Activated CD8-positive, alpha-beta T cell treated with anti-CD3 and anti-CD28 coated beads for 36 hours (primary cell): ENCODE measurements at regions of chr4 and their contacts with region 1.

Region 1: GRCh38 chr4:185134307-185134869 is 8.7 kb upstream of the SLC25A4 start:
- DNase-seq: no peak
- ATAC-seq: peak; percentile 80
- H3K4me3 Mint-ChIP-seq: no peak overlapping the region
- H3K27ac Mint-ChIP-seq: no peak overlapping the region
- H3K4me1 Mint-ChIP-seq: no peaks in the 10 kb centered on the region
- H3K27me3 Mint-ChIP-seq: peaks cover 12% of the 10 kb centered on the region
- CTCF ChIP-seq: peak; percentile 80

Region 2: DNA sequence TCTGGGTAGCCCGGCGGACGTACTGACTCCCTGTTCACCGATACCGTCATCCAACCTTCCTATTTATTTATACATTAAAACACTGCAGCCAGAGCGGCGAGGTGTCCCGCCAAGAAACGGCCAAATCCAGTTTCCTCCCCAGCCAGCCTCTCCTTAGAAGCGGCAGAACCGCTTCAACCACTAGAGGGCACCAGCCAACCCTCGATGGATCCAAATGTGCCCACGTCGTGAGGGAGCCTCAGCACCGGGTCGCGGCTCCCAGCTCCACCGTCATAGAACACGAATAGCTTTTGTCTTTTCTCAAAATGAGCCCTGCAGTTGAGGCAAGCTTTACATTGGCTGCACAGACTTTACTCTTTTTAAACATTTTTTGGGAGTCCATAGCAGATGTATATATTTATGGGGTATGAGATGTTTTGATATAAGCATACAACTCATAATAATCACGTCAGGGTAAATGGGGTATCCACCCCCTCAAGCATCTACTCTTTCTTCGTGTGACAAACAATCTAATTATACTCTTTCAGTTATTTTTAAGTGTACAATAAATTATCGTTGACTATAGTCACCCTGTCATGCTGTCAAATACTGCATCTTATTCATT is 129.1 kb before region 1 on chr4:
- CTCF ChIA-PET with region 1: interaction called, 9 read pairs
- POLR2A ChIA-PET with region 1: no interaction called
- intact Hi-C with region 1: loop called (anchors 10 kb)
- DNase-seq: peak; percentile 92
- ATAC-seq: peak; percentile 97
- H3K4me3 Mint-ChIP-seq: peak overlapping the region; percentile 1
- H3K27ac Mint-ChIP-seq: no peak overlapping the region
- H3K4me1 Mint-ChIP-seq: peaks cover 3% of the 10 kb centered on the region
- H3K27me3 Mint-ChIP-seq: peaks cover 39% of the 10 kb centered on the region
- CTCF ChIP-seq: peak; percentile 87

Region 3: DNA sequence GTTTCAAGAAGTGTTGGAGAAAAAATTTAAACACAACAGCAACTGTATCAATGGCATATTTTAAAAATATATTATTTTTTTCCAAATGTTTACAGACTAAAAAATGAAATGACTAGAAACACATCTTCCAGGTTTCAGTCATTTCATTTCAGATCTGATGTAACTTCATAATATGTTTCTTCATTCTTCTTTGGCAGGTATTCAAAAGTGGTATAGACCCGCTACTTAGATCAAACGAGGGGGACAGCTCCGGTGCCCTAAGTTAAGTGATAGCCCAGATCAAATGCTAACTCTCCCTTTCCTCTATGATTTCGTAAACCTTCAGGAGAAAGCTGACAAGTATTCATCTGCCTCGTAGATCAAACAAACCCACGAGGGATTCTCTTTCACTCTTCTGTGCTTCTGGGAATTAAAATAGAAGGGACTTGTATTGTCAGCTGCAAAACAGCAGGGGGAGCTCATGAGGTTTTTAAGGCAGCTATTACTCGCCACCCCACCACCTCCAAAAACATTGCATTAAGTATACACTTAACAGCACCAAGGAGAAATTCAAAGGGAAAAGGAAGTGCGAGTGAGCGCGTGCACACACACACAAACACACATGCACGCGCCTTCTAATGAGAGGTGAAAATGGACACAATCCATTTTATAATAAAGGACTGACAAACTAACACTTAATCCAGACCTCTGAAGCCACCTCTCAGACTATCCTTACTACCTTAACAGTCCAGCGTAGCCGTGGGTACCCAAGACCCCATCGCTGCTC is 94.7 kb before region 1 on chr4:
- CTCF ChIA-PET with region 1: interaction called, 54 read pairs
- POLR2A ChIA-PET with region 1: no interaction called
- intact Hi-C with region 1: loop called (anchors 2 kb)
- DNase-seq: peak; percentile 67
- ATAC-seq: peak; percentile 95
- H3K4me3 Mint-ChIP-seq: peak overlapping the region; percentile 71
- H3K27ac Mint-ChIP-seq: peak overlapping the region; percentile 81
- H3K4me1 Mint-ChIP-seq: peaks cover 12% of the 10 kb centered on the region
- H3K27me3 Mint-ChIP-seq: peaks cover 4% of the 10 kb centered on the region
- CTCF ChIP-seq: peak; percentile 77

Region 4: GRCh38 chr4:185122681-185123345 is 11.6 kb before region 1 on chr4:
- CTCF ChIA-PET with region 1: interaction called, 15 read pairs
- POLR2A ChIA-PET with region 1: no interaction called
- intact Hi-C with region 1: no loop called
- DNase-seq: no peak
- ATAC-seq: no peak
- H3K4me3 Mint-ChIP-seq: no peak overlapping the region
- H3K27ac Mint-ChIP-seq: no peak overlapping the region
- H3K4me1 Mint-ChIP-seq: peaks cover 2% of the 10 kb centered on the region
- H3K27me3 Mint-ChIP-seq: peaks cover 16% of the 10 kb centered on the region
- CTCF ChIP-seq: no peak

Region 5: GRCh38 chr4:185189606-185190305 is 55.4 kb after region 1 on chr4:
- CTCF ChIA-PET with region 1: interaction called, 10 read pairs
- POLR2A ChIA-PET with region 1: no interaction called
- intact Hi-C with region 1: no loop called
- DNase-seq: no peak
- ATAC-seq: no peak
- H3K4me3 Mint-ChIP-seq: no peak overlapping the region
- H3K27ac Mint-ChIP-seq: no peak overlapping the region
- H3K4me1 Mint-ChIP-seq: peaks cover 34% of the 10 kb centered on the region
- H3K27me3 Mint-ChIP-seq: no peaks in the 10 kb centered on the region
- CTCF ChIP-seq: no peak

Region 6: DNA sequence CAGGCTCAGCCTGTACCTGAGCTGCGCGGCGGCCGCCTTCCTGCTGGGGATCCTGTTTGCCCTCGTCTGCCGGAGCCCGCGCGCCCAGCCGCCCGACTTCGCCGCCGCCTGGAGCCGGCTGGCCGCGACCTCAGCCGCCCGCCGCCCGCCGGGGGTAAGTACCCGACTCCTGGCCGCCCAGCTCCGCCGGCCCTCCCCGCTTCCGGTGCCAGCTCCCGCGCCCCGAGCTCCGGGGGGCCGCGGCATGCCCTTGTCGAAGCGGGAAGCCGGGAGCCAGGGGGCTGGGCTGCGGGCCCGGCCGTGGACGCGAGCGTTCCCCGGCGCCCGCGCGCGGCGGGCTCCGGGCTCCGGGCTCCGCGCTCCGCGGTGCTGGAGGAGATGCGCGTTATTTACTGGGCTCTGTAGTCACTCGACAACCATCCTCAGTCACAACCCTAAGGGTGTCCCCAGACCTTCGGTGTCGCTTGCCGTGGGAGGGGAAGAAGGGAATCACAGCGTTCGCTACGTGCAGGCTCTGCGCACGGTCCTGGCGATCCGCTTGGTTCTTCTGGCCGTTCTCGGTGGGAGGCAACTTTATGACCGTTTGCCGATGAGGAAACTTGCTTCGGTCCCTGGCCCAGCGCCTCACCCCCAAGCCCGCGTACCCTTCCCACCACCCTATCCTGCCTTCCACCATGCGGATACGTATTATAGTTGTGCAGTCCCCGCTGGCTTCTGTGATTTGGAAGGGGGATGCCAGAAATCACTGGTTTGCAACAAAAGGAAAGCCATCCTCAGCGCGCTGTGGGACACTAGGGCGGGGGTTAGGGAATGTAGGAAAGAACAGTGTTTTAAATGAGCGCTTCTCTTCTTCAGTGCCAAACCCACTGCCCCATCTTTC is 76.0 kb after region 1 on chr4:
- CTCF ChIA-PET with region 1: no interaction called
- POLR2A ChIA-PET with region 1: no interaction called
- intact Hi-C with region 1: no loop called
- DNase-seq: peak; percentile 61
- ATAC-seq: peak; percentile 32
- H3K4me3 Mint-ChIP-seq: peak overlapping the region; percentile 93
- H3K27ac Mint-ChIP-seq: peak overlapping the region; percentile 85
- H3K4me1 Mint-ChIP-seq: peaks cover 28% of the 10 kb centered on the region
- H3K27me3 Mint-ChIP-seq: no peaks in the 10 kb centered on the region
- CTCF ChIP-seq: no peak